ENCODE measurements at regions of chr17 and their contacts with region 1.

Region 1: DNA sequence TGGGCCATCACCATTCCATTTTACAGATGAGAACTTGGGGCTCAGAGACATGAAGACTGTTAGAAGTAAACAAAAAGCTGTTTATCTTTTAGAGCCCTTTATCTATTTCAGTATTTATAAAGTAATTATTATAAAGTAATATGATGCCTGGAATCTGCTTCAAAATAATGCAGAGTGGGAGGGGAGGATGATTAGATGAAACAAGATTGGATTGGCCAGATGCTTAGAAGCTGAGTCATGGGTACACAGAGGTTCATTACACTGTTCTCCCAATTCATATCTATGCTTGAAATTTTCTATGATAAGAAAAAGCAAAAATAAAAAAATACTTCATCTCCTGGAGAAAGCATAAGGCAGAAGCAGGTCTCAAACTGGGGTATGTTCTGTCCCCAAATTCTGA is 29.4 kb downstream of the TOM1L2 start:
- DNase-seq: peak; percentile 45
- H3K4me3 ChIP-seq: peak overlapping the region in 1 of 3 experiments; percentile 29
- H3K27ac ChIP-seq: peak overlapping the region; percentile 61
- H3K4me1 ChIP-seq: peaks cover 38% of the 10 kb centered on the region
- H3K27me3 ChIP-seq: no peaks in the 10 kb centered on the region
- CTCF ChIP-seq: no peak
- POLR2A ChIP-seq: no peak

Region 2: GRCh38 chr17:17783116-17783824 is 159.6 kb before region 1 on chr17:
- CTCF ChIA-PET with region 1: no interaction called
- POLR2A ChIA-PET with region 1: no interaction called
- dilution Hi-C with region 1: no loop called
- intact Hi-C with region 1: no loop called
- DNase-seq: peak; percentile 32
- H3K4me3 ChIP-seq: peak overlapping the region; percentile 23 to 30 (median 26)
- H3K27ac ChIP-seq: no peak overlapping the region
- H3K4me1 ChIP-seq: peaks cover 30% of the 10 kb centered on the region
- H3K27me3 ChIP-seq: no peaks in the 10 kb centered on the region
- CTCF ChIP-seq: peak in 1 of 2 donors; percentile 8
- POLR2A ChIP-seq: no peak

Region 3: DNA sequence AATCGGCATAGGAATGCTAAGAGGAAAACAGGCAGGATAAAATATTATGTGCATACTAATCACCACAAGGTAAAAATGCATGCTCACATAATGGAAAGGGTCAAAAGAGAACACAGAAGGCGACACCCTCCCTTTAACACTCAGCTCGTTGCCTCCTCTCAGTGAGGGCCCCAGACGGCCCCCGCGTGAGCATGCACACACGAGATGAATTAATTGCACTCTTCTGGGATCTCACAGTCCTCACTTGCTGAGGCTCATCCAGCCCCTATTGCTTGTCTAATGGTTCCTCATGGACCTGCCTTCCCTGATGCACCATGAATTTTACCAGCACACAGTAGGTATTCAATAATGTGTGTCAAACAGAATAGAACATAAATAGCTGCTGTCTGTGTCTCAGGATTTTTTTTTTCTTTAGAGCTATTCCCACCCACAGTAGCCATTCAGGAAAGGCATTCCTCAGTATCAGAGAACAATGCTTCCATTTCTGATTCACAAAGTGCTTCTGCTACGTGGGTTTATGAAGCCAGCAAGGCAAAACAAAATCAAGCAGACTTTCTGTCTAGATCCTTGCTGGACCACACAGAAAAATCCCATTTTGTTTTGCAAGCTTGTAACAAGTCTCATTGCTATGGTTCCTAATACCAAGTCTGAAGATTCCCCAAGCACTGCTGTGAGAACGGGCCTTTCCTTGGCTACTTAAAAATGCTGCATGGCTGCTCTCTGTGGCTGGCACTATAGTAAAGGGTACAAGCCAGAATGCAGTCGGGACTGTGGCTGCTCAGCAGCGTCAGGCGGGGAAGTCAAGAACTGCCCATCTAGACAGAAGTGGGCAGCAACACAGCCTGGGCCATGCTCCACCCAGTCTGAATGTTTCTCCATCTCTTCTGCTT is 14.2 kb before region 1 on chr17:
- CTCF ChIA-PET with region 1: interaction called, 14 read pairs
- POLR2A ChIA-PET with region 1: no interaction called
- dilution Hi-C with region 1: no loop called
- intact Hi-C with region 1: no loop called
- DNase-seq: peak; percentile 65
- H3K4me3 ChIP-seq: no peak overlapping the region
- H3K27ac ChIP-seq: peak overlapping the region; percentile 14
- H3K4me1 ChIP-seq: peaks cover 7% of the 10 kb centered on the region
- H3K27me3 ChIP-seq: no peaks in the 10 kb centered on the region
- CTCF ChIP-seq: no peak
- POLR2A ChIP-seq: no peak

Measured in endothelial cell of umbilical vein (primary cell).